ENCODE measurements at regions of chr1 and their contacts with region 1.

Region 1: DNA sequence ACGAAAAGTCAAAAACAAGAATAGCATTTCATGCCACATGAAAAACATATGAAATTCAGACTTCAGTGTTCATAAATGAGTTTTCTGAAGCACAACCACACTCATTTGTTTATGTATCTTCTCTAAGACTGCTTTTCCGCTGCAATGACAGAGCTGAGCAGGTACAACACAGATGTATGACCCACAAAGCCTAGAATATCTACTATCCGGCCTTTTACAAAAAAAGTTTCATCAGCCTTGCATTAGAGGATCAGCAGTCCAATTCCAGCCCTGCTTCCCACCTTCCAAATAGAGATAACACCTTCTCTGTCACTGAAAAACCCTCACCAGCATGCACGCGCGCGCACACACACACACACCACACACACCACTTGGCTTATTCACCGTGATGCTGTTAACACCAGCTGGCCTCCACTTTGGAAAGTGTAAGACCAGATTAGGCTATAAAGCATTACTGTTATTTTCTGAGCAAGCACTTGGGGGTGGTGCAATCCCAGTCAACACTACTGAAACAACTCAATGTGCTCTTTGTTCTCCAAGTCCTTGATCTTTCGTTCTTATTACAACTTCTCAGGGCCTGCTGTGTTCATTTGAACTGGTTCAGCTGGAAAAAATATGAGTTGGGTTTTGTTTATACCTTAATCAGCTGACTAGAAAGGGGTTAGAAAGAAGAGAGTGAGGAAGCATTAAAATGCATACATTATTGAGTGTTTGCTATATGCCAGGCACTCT is 90.0 kb downstream of the GLUL start:
- DNase-seq: peak; percentile 57
- H3K4me3 Mint-ChIP-seq: no peak overlapping the region
- H3K27ac Mint-ChIP-seq: peak overlapping the region; percentile 43
- H3K4me1 Mint-ChIP-seq: peaks cover 31% of the 10 kb centered on the region
- H3K27me3 Mint-ChIP-seq: no peaks in the 10 kb centered on the region
- CTCF ChIP-seq: no peak

Region 2: DNA sequence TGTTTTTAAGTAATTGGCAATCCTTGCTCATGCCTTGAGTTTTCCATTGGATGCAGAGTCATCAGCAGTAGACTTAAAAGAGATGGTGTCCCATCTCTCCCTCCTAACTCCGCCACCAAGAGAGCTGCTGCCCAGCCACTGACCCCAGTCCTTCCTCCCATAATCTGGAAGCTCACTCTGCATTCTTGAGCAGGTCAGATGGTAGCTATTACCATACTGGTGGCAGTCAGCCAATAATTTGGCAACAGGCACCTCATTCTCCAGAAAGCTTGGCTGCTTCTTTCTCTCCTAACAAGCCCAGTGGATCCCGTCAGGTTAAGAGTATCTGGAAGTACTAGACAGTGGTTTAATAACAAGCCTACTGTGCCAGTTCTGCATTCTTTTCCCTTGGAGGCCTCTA is 512.2 kb before region 1 on chr1:
- CTCF ChIA-PET with region 1: no interaction called
- intact Hi-C with region 1: no loop called
- DNase-seq: no peak
- H3K4me3 Mint-ChIP-seq: no peak overlapping the region
- H3K27ac Mint-ChIP-seq: no peak overlapping the region
- H3K4me1 Mint-ChIP-seq: no peaks in the 10 kb centered on the region
- H3K27me3 Mint-ChIP-seq: peaks cover 62% of the 10 kb centered on the region
- CTCF ChIP-seq: no peak

Region 3: DNA sequence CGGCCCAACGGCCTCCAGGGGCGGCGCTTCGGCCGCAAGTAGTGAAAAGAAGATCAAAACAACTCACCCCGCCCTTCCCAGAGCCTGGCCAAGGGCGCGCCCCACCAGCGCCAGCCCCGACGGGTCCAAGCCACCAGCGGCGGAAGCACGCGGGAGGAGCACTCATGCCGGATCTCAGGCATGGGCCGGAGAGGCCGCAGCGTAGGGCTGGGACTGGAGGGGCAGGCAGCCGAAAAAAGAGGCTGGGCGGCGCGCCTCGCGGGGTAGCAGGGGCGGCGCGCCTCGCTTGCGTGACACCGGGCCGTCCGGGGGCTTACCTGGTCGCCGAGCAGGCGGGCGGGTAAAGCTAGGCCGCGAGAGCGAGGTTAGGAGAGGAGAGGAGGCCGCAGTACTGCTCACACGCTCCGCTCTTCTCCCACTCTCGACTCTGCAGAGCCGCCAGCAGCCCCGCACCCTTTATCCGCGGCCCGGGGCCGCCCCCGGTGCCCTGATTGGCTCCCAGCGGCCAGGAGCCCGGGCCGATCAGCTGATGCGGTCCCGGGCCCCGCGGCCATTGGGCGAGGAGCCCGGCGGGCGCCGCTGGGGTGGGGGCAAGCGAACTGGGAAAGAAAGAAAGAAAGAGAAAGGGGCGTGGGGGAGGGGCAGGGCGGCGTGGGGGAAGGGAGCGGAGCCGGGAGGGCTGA is 89.9 kb after region 1 on chr1 and contains the start of gene GLUL:
- CTCF ChIA-PET with region 1: interaction called, 10 read pairs
- intact Hi-C with region 1: loop called (anchors 1 kb)
- DNase-seq: peak; percentile 95
- H3K4me3 Mint-ChIP-seq: peak within 1 kb of the TSS; percentile 94
- H3K27ac Mint-ChIP-seq: peak within 1 kb of the TSS; percentile 78
- H3K4me1 Mint-ChIP-seq: peaks cover 18% of the 10 kb centered on the region
- H3K27me3 Mint-ChIP-seq: no peaks in the 10 kb centered on the region
- CTCF ChIP-seq: peak; percentile 34
- total RNA-seq, gene GLUL: 139 and 188 TPM in 2 replicates

Measured in Calu3 (cell line).